Naive thymus-derived CD4-positive, alpha-beta T cell (primary cell): ENCODE measurements at regions of chr5 and their contacts with region 1.

Region 1: DNA sequence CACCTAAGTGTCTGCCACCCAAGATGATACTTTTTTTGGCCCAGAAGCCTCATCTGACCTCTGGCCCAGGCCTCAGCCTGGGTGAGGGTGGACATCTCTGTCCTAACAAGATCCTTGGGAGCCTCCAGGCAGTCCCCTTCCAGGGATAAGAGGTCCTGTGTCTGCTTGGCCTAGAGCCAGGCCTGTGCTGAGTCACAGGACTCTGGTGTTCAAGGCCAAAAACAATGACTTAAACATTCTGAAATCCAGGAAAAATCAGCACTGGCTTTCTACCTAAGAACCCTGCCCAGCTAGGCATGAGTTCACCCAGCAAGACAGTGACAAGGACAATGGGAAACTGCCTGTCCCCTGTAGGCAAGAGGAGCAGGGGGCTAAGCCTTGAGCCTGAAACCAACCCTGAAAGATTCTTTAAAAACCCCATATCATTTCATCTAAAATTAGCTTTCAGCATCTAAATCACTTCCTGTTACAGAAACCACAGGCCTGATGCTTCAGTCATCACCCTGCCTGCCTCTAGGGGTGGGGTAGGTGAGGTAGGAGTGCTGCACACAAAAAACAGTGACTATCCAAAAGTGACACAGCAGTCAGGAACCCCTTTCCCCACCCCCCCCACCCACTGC is 29.9 kb downstream of the CSF2 start:
- DNase-seq: peak in 8 of 9 donors; percentile 49 to 82 (median 72)
- ATAC-seq: peak; percentile 92
- H3K4me3 ChIP-seq: peak overlapping the region; percentile 0
- H3K4me3 Mint-ChIP-seq: peak overlapping the region in 9 of 10 donors; percentile 16 to 74 (median 56)
- H3K27ac ChIP-seq: no peak overlapping the region
- H3K27ac Mint-ChIP-seq: peak overlapping the region in 8 of 9 donors; percentile 14 to 86 (median 64)
- H3K4me1 ChIP-seq: peaks cover 40 to 72% of the 10 kb centered on the region in 2 donors
- H3K4me1 Mint-ChIP-seq: peaks cover 42 to 86% (median 51%) of the 10 kb centered on the region in 7 donors
- H3K27me3 ChIP-seq: no peaks in the 10 kb centered on the region
- H3K27me3 Mint-ChIP-seq: no peaks in the 10 kb centered on the region

Region 2: GRCh38 chr5:131252824-131253171 is 850.6 kb before region 1 on chr5:
- CTCF ChIA-PET with region 1: no interaction called
- POLR2A ChIA-PET with region 1: no interaction called
- intact Hi-C with region 1: loop called in 1 of 2 experiments (anchors 10 kb)
- DNase-seq: peak; percentile 41 to 90 (median 87)
- ATAC-seq: peak; percentile 93
- H3K4me3 ChIP-seq: peak overlapping the region; percentile 72
- H3K4me3 Mint-ChIP-seq: peak overlapping the region; percentile 80 to 97 (median 96)
- H3K27ac ChIP-seq: peak overlapping the region; percentile 78
- H3K27ac Mint-ChIP-seq: peak overlapping the region; percentile 91 to 97 (median 95)
- H3K4me1 ChIP-seq: peaks cover 51 to 54% of the 10 kb centered on the region in 2 donors
- H3K4me1 Mint-ChIP-seq: peaks cover 62 to 89% (median 67%) of the 10 kb centered on the region in 7 donors
- H3K27me3 ChIP-seq: no peaks in the 10 kb centered on the region
- H3K27me3 Mint-ChIP-seq: no peaks in the 10 kb centered on the region

Region 3: DNA sequence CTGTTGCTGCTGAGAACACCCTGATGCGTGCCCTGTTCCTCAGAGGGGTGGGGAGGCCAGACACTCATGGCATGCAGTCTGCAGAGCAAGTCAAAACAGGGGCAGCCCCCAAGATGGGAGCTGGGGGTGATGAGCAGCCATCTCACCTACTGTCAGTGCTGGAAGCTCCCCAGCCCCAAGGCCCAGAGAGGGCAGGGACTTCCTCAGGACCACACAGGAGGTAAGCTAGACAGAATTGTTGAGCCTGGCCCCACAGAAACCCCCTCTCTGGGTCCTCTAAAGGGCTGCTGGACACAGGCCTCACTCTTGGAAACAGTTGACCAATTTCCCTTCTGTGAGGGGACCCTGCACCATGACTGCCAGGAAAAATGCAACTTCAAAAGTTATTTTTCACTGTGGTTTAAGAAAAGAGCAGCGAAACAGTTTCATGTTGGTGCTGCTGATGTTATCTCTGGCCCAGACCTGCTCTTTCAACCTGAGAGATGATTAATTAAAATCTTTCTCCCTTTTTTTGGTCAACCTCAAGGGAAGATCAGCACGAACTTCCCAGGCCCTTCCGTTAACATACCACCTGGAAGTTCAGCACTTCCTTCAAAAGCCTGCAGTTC is 20.3 kb before region 1 on chr5:
- CTCF ChIA-PET with region 1: no interaction called
- POLR2A ChIA-PET with region 1: no interaction called
- intact Hi-C with region 1: loop called in 1 of 2 experiments (anchors 1 kb)
- DNase-seq: no peak
- ATAC-seq: no peak
- H3K4me3 ChIP-seq: no peak overlapping the region
- H3K4me3 Mint-ChIP-seq: peak overlapping the region in 1 of 10 donors; percentile 43
- H3K27ac ChIP-seq: no peak overlapping the region
- H3K27ac Mint-ChIP-seq: peak overlapping the region in 1 of 9 donors; percentile 80
- H3K4me1 ChIP-seq: peaks cover 0 to 14% of the 10 kb centered on the region in 2 donors
- H3K4me1 Mint-ChIP-seq: peaks cover 7 to 68% (median 12%) of the 10 kb centered on the region in 7 donors
- H3K27me3 ChIP-seq: no peaks in the 10 kb centered on the region
- H3K27me3 Mint-ChIP-seq: no peaks in the 10 kb centered on the region

Region 4: GRCh38 chr5:132180134-132180745 is 76.8 kb after region 1 on chr5:
- CTCF ChIA-PET with region 1: no interaction called
- POLR2A ChIA-PET with region 1: no interaction called
- intact Hi-C with region 1: loop called (anchors 2 to 10 kb)
- DNase-seq: peak in 4 of 9 donors; percentile 4 to 19 (median 6)
- ATAC-seq: peak; percentile 24
- H3K4me3 ChIP-seq: no peak overlapping the region
- H3K4me3 Mint-ChIP-seq: peak overlapping the region in 1 of 10 donors; percentile 23
- H3K27ac ChIP-seq: no peak overlapping the region
- H3K27ac Mint-ChIP-seq: peak overlapping the region in 1 of 9 donors; percentile 65
- H3K4me1 ChIP-seq: peaks cover 0 to 4% of the 10 kb centered on the region in 2 donors
- H3K4me1 Mint-ChIP-seq: peaks cover 16 to 40% (median 19%) of the 10 kb centered on the region in 7 donors
- H3K27me3 ChIP-seq: no peaks in the 10 kb centered on the region
- H3K27me3 Mint-ChIP-seq: peaks cover 0 to 4% (median 0%) of the 10 kb centered on the region in 5 donors

Region 5: GRCh38 chr5:132639706-132640130 is 536.3 kb after region 1 on chr5:
- CTCF ChIA-PET with region 1: no interaction called
- POLR2A ChIA-PET with region 1: no interaction called
- intact Hi-C with region 1: loop called in 1 of 2 experiments (anchors 10 kb)
- DNase-seq: no peak
- ATAC-seq: no peak
- H3K4me3 ChIP-seq: no peak overlapping the region
- H3K4me3 Mint-ChIP-seq: peak overlapping the region in 1 of 10 donors; percentile 55
- H3K27ac ChIP-seq: no peak overlapping the region
- H3K27ac Mint-ChIP-seq: peak overlapping the region in 2 of 9 donors; percentile 32 to 64
- H3K4me1 ChIP-seq: no peaks in the 10 kb centered on the region
- H3K4me1 Mint-ChIP-seq: peaks cover 0 to 87% (median 0%) of the 10 kb centered on the region in 7 donors
- H3K27me3 ChIP-seq: no peaks in the 10 kb centered on the region
- H3K27me3 Mint-ChIP-seq: no peaks in the 10 kb centered on the region